ENCODE measurements at regions of chr6 and their contacts with region 1.

Region 1: GRCh38 chr6:52577022-52577777 is at the start of gene TRAM2:
- DNase-seq: peak; percentile 79 to 92
- ATAC-seq: peak; percentile 83
- total RNA-seq, gene TRAM2: 15.3 to 23.7 TPM

Region 2: DNA sequence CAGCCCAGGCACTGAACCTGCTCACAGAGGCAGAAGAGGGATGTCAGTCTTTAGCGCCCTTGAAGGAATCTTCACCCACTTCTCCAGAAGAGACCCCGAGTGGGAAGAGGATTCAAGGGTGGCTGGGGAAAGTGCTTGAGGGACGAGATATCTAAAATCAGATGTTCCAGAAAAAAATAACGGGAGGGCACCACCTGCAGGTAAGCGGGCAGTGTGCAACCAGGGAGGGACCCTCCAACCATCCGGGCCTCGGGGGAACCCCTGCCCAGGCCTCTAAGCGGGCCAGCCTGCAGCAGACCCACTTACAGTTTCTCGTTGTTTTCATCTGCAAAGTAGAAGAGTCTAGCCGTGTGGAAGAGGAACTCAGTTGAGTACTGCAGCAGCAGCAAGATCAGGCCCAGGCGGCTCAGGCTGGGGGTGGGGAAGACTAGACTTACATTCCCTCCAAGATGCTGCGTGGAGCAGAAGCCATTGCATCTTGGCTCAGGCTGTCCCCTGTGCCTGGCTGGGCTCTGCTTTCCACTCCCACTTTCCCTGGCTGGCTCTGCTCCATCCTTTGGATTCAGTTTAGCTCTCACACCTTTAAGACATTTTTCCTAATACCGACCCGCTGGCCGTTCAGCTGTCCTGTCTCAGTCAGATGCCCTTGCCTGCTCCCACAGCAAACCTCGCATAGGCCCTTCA is 71.3 kb before region 1 on chr6:
- intact Hi-C with region 1: loop called in 1 of 2 experiments (anchors 5 kb)
- DNase-seq: no peak
- ATAC-seq: no peak

Measured in left colon (tissue), 2 donors.